Adrenal gland (tissue), 19 donors: ENCODE measurements at regions of chr1 and their contacts with region 1.

Region 1: GRCh38 chr1:89762779-89763648 is 57.8 kb upstream of the LRRC8D start:
- DNase-seq: peak; percentile 83 to 93 (median 90)
- H3K4me3 ChIP-seq: peak overlapping the region; percentile 11 to 52 (median 42)
- H3K27ac ChIP-seq: peak overlapping the region in 3 of 5 donors; percentile 21 to 37 (median 26)
- H3K4me1 ChIP-seq: peaks cover 15 to 24% of the 10 kb centered on the region in 2 donors
- H3K27me3 ChIP-seq: no peaks in the 10 kb centered on the region
- CTCF ChIP-seq: peak; percentile 95 to 99 (median 98)
- POLR2A ChIP-seq: peak in 1 of 2 donors; percentile 7

Region 2: GRCh38 chr1:88936223-88936523 is 826.8 kb before region 1 on chr1:
- intact Hi-C with region 1: no loop called
- DNase-seq: no peak
- H3K4me3 ChIP-seq: no peak overlapping the region
- H3K27ac ChIP-seq: no peak overlapping the region
- H3K4me1 ChIP-seq: no peaks in the 10 kb centered on the region
- H3K27me3 ChIP-seq: no peaks in the 10 kb centered on the region
- CTCF ChIP-seq: no peak
- POLR2A ChIP-seq: no peak

Region 3: DNA sequence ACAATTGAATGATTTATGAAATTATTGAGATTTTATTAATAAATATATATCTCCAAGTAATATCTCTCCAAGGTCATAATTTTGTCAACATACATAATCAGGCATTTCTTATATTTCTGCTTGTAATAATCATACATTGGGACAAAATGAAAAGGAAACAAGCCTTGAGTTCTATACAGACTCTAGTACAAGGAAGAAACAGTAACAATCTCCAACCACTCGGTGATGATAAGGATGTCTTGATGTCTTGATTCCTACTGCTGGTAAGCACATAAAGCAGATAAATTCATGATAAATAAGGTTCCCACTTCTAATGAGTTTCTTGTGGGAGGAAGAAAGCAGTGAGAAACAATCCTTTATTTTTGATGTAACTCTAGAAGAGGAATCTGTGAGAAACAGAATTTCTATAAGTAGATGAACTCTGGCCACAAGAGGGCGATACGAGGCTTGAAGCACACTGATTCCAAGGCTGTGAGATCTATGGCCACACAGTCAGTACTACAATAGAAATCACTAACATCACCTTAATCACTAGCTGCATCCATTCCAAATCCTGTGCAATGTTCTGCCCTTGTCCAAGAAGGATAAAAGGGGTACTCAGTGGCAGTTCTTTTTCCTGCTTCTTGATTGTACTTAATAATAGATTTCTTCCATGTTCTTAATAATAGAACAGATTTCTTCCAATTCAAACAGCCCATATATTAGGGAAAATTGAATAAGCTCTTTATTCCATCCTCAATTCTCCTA is 279.8 kb before region 1 on chr1:
- intact Hi-C with region 1: loop called (anchors 5 to 10 kb)
- DNase-seq: peak; percentile 55 to 92 (median 82)
- H3K4me3 ChIP-seq: no peak overlapping the region
- H3K27ac ChIP-seq: no peak overlapping the region
- H3K4me1 ChIP-seq: no peaks in the 10 kb centered on the region
- H3K27me3 ChIP-seq: no peaks in the 10 kb centered on the region
- CTCF ChIP-seq: peak; percentile 61 to 86 (median 75)
- POLR2A ChIP-seq: no peak

Region 4: GRCh38 chr1:89605692-89606091 is 157.3 kb before region 1 on chr1:
- intact Hi-C with region 1: loop called in 1 of 2 experiments (anchors 10 kb)
- DNase-seq: peak in 2 of 7 donors; percentile 35 to 45
- H3K4me3 ChIP-seq: no peak overlapping the region
- H3K27ac ChIP-seq: no peak overlapping the region
- H3K4me1 ChIP-seq: peaks cover 10 to 46% of the 10 kb centered on the region in 2 donors
- H3K27me3 ChIP-seq: no peaks in the 10 kb centered on the region
- CTCF ChIP-seq: no peak
- POLR2A ChIP-seq: no peak

Region 5: DNA sequence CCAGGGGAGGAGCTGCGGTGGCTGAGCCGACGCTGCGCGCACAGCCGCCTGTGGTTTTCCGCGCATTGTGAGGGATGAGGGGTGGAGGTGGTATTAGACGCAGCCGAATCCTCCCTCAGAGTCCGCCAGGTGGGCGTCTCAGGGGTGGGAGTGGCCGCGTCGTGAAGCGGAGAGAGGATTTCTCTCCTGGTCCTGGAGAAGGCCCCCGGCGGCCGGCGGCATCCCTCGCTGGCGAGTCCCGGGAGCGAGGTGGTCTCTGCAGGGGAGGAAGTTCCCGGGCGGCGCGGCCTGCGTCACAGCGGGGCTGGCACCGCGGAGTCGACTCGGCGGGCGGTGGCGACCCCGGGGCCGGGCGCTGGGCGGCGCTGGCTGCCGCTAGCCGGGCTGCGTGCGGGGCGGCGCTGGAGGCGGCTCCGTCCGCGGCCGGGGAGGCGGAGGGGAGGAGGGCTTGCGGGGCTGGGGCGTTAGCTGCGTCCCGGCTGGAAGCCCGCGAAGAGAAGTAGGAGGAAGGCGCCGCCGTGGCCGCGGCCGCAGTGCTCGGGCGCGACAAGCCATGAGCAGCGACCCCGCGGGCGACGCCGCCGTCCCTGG is 130.3 kb before region 1 on chr1 and contains the start of gene LRRC8C:
- intact Hi-C with region 1: loop called (anchors 5 kb)
- DNase-seq: peak; percentile 81 to 90 (median 85)
- H3K4me3 ChIP-seq: peak within 1 kb of the TSS; percentile 64 to 98 (median 88)
- H3K27ac ChIP-seq: peak within 1 kb of the TSS; percentile 72 to 99 (median 90)
- H3K4me1 ChIP-seq: peaks cover 20 to 41% of the 10 kb centered on the region in 2 donors
- H3K27me3 ChIP-seq: no peaks in the 10 kb centered on the region
- CTCF ChIP-seq: peak in 4 of 6 experiments; percentile 27 to 90 (median 72)
- POLR2A ChIP-seq: peak in 1 of 2 donors; percentile 65
- total RNA-seq, gene LRRC8C: 6.5 to 33.6 (median 12.1) TPM